OCI-LY7 (cell line): ENCODE measurements at regions of chr5 and their contacts with region 1.

Region 1: GRCh38 chr5:159073026-159073425 is 26.7 kb downstream of the EBF1 start:
- DNase-seq: no peak
- H3K4me3 ChIP-seq: no peak overlapping the region
- H3K27ac ChIP-seq: no peak overlapping the region
- H3K4me1 ChIP-seq: peaks cover 24% of the 10 kb centered on the region
- CTCF ChIP-seq: no peak

Region 2: DNA sequence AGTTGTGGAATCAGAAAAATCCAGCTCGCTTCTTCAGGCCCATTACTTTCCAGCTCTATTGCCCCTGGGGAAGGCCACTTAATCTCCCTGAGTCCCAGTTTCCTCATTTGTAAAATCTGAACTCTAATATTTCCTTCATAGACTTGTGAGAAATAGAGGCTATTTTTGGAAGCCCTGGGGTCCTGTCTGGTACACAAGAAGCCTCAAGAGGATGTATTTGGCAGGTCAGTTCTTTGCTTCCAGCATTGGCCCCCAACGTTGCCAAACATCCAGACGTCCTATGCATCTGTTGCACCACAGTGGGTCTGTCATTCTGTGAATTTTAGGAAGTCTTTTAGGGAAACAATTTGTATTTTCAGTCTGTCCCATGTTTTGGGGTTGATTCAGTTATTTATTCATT is 499.2 kb before region 1 on chr5:
- CTCF ChIA-PET with region 1: no interaction called
- POLR2A ChIA-PET with region 1: no interaction called
- intact Hi-C with region 1: no loop called
- DNase-seq: no peak
- H3K4me3 ChIP-seq: no peak overlapping the region
- H3K27ac ChIP-seq: no peak overlapping the region
- H3K4me1 ChIP-seq: peaks cover 12% of the 10 kb centered on the region
- CTCF ChIP-seq: no peak

Region 3: DNA sequence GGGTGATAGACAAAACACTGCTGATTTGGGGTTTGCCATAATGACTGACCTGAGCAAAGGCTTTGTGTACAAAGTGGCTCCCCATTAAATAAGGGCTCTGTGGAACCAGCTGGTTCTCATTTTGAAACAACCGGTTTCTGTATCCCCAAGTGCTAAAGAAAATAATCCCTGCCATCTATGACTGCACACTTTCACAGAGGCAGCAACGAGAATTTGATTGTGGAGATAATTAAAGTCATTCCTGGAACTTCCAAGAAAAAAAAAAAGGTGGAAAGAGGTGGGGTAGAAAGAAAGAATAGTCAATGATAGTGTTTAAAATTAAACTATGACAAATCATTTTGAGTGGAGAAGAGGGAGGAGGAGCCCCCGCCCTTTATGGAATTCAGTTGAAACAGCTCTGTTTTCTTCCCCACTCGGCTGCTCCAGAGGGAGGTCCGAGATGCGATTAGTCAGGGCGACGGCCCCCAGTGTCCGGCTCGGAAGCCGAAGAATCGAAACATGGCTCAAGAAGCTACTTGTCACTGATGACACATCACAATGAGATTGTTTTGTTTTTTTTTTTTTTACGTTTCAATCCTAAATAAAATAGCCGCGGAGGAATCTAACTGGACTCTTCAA is 11.7 kb before region 1 on chr5:
- CTCF ChIA-PET with region 1: no interaction called
- POLR2A ChIA-PET with region 1: interaction called, 18 read pairs
- intact Hi-C with region 1: no loop called
- DNase-seq: no peak
- H3K4me3 ChIP-seq: no peak overlapping the region
- H3K27ac ChIP-seq: no peak overlapping the region
- H3K4me1 ChIP-seq: peaks cover 35% of the 10 kb centered on the region
- CTCF ChIP-seq: no peak